Activated T-helper 2 cell treated with anti-CD3 and anti-CD28 coated beads, Interferon-gamma antibody, Interleukin-2, Interleukin-4, amounts not matched to agents 10 μg/mL and 5 μg/mL and 100 μg/mL, durations not matched to agents 14 hours and 24 hours and 36 hours (primary cell): ENCODE measurements at regions of chr11 and their contacts with region 1.

Region 1: DNA sequence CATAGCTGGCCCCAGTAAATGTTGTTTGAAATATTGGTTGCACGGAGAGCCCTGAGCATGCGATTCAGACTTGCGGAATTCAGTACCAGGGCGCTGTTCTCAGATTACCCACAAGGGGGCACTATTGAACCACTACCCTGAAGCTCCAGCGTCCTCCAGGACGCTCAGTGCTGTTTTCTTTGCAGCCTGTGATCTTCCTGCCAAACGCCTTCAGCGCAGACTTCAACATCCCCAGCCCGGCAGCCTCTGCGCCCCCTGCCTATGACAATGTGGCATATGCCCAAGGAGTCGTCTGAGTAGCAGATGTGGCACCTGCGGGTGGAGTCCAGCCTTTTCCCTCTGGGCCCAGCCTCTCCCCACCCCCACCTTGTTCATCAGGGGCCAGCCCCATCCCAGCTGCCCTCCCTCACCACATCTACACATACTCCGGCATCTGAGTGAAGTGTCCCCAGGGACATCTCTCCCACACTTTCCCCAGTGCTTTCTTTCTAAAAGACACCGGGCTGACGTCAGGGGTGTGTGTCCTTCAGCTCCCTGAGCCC is 9.6 kb upstream of the MS4A10 start:
- DNase-seq: peak; percentile 76
- H3K4me3 Mint-ChIP-seq: no peak overlapping the region
- H3K27ac Mint-ChIP-seq: no peak overlapping the region
- H3K4me1 Mint-ChIP-seq: peaks cover 3% of the 10 kb centered on the region
- H3K27me3 Mint-ChIP-seq: peaks cover 20% of the 10 kb centered on the region

Region 2: DNA sequence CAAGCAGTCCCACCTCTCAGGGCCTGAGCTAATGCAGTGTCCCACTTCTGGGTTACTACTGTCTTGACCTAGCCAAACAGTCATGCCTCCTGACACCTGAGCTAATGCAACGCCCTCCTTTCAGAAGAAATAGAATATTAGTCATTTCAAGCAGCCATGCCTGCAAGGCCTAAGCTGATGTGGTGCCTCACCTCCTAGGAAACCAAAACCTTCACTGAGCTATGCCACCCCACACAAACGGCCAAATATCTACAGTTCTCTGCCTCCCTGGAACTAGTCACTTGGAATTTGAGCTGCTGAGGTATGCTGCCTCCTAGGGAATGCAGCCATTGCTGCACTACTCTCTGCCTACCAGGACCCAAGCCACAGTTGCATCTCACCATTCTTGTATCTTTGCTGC is 456.8 kb before region 1 on chr11:
- intact Hi-C with region 1: no loop called
- DNase-seq: no peak
- H3K4me3 Mint-ChIP-seq: no peak overlapping the region
- H3K27ac Mint-ChIP-seq: no peak overlapping the region
- H3K4me1 Mint-ChIP-seq: no peaks in the 10 kb centered on the region
- H3K27me3 Mint-ChIP-seq: no peaks in the 10 kb centered on the region

Region 3: GRCh38 chr11:60887556-60887955 is 112.1 kb after region 1 on chr11:
- intact Hi-C with region 1: loop called (anchors 1 kb)
- DNase-seq: peak; percentile 55
- H3K4me3 Mint-ChIP-seq: no peak overlapping the region
- H3K27ac Mint-ChIP-seq: no peak overlapping the region
- H3K4me1 Mint-ChIP-seq: peaks cover 25% of the 10 kb centered on the region
- H3K27me3 Mint-ChIP-seq: no peaks in the 10 kb centered on the region